Dendritic cell treated with granulocyte-macrophage colony-stimulating factor and Interleukin-4, amounts not matched to agents 40 ng/mL and 50 ng/mL, for 4 days (primary cell): ENCODE measurements at regions of chr2 and their contacts with region 1.

Region 1: GRCh38 chr2:152054593-152054992 is 44.3 kb downstream of the CACNB4 start:
- H3K4me3 Mint-ChIP-seq: no peak overlapping the region
- H3K27ac Mint-ChIP-seq: peak overlapping the region; percentile 25
- H3K4me1 Mint-ChIP-seq: peaks cover 43% of the 10 kb centered on the region
- H3K27me3 Mint-ChIP-seq: peaks cover 34% of the 10 kb centered on the region

Region 2: GRCh38 chr2:152089238-152089637 is 34.6 kb after region 1 on chr2:
- intact Hi-C with region 1: loop called (anchors 5 kb)
- H3K4me3 Mint-ChIP-seq: peak overlapping the region; percentile 49
- H3K27ac Mint-ChIP-seq: peak overlapping the region; percentile 81
- H3K4me1 Mint-ChIP-seq: peaks cover 41% of the 10 kb centered on the region
- H3K27me3 Mint-ChIP-seq: no peaks in the 10 kb centered on the region